Motor neuron (in vitro differentiated cells): ENCODE measurements at regions of chr3 and their contacts with region 1.

Region 1: GRCh38 chr3:105686278-105686897 is 182.4 kb downstream of the CBLB start:
- ATAC-seq: no peak
- H3K4me3 ChIP-seq: no peak overlapping the region
- H3K27ac ChIP-seq: no peak overlapping the region
- H3K4me1 ChIP-seq: no peaks in the 10 kb centered on the region

Region 2: DNA sequence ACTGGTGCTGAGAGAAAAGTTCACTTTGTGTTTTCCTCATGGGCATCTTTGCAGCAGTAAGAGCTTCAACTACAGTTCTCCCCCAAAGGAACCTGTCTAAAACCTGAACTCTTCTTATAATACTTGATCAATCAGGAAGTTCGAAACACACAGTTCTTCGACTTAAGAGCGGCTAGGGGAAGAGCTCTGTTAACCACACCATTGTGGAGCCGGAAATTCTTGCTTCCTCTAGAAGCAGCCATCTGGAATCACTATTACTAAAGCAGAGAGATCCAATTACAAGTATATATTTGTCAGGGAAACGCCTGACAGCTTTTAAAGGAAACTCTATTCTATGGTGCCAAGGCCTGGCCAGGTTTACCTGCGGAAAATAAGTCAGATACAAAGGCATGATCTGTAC is 519.8 kb after region 1 on chr3:
- in situ Hi-C with region 1: loop called in 1 of 9 experiments (anchors 25 kb)
- ATAC-seq: peak in 3 of 8 experiments; percentile 29 to 61 (median 59)
- H3K4me3 ChIP-seq: no peak overlapping the region
- H3K27ac ChIP-seq: no peak overlapping the region
- H3K4me1 ChIP-seq: no peaks in the 10 kb centered on the region

Region 3: DNA sequence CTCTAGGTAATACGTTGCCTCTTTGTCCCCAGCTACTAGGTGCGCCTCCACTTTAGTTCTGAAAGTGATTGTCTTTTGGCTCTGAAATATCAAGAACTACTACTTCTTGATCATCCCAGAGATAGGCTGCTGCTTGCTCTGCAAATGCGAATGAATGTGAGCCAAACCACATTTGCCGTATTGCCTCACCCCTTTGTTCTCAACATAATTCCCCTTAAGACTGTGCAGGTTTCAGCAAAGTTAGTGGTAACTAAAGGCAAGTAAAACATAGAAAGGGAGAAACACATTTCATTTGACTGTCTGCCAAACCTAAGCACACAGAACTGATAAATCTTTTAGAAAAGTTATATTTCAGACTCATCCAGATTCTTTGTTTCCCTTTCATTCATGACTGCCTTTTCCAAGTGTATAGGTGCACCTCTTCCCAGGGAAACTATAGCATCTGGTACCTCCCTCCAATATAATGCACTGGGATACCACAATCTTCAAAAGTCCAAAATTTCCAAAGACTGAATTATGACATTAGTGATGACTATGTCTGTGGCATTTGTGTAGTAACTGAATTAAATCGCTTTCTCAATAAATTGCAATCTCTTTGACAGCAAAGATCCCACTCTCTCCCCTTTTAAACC is 903.0 kb after region 1 on chr3:
- in situ Hi-C with region 1: loop called in 1 of 9 experiments (anchors 25 kb)
- ATAC-seq: peak in 2 of 8 experiments; percentile 51 to 75
- H3K4me3 ChIP-seq: no peak overlapping the region
- H3K27ac ChIP-seq: no peak overlapping the region
- H3K4me1 ChIP-seq: no peaks in the 10 kb centered on the region

Region 4: DNA sequence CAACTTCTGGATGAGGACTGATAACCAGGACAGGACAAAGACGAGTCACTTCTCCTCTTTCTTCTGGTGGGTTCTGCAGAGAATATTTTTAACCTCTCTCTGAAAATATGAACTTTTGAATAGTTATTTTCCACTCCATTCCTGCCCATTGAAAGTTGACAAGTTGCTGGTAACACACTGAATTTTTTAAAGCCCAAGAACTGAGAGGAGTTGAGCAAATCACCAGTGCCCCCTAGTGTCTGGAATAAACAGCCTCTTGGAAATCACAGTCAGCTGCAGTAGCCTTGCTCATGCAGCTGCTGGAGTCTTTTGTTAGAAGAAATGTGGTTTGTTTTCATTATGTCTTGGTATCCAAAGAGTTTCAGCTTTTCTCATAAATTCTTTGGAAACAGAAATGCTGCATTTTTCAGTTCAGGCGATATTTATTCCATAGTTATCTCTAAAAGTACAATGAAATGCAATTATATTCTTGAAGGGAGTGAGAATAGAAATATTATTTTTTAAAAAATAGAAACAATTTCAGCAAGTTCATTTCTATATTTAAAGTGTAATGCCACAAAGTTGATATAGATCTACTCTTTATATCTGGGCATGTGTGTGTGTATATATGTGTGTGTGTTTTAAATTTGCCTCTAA is 923.4 kb after region 1 on chr3:
- in situ Hi-C with region 1: loop called in 1 of 9 experiments (anchors 25 kb)
- ATAC-seq: peak; percentile 64 to 92 (median 81)
- H3K4me3 ChIP-seq: no peak overlapping the region
- H3K27ac ChIP-seq: no peak overlapping the region
- H3K4me1 ChIP-seq: peaks cover 0 to 2% of the 10 kb centered on the region in 2 donors